Sigmoid colon (tissue), 7 donors: ENCODE measurements at regions of chr17 and their contacts with region 1.

Region 1: DNA sequence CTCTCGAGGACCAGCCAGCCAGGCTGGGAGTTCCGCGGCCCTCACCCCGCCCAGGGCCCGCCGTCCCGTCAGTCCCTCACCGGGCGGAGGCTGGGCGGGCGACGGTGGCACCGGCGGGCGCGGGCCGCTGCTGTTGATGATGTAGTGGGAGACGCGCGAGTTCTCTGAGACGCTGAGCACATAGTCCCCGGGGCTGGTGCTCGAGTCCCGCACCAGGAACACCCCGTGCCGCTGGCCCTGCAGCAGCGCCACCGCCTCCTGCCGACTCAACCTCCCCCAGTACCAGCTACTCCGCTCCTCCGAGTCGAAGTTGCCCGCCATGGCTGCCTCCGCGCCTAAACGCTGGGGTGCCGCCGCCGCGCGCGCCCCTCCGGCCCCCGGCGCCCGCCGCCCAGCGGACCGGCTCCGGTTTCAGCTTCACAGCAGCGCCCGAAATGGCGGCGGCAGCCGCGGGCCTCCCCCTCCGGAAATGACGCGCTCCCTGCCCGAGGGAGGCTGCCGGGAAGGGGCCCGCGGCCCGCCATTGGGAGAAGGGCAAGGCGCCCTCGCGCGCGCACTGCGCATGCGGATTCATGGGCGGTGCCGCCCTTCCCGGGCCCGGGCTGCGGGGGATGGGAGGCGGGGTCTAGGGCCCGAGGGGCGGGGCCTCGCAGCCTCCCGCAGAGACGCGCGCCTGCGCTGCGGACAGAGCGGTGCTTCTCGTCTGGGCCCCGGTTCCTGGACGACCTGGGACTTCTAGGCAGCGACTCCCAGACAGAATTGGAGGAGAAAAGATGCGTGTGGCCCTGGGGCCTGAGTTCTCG is at the start of gene CRK:
- DNase-seq: peak; percentile 98
- H3K4me3 ChIP-seq: peak within 1 kb of the TSS; percentile 64 to 98 (median 81)
- H3K27ac ChIP-seq: peak within 1 kb of the TSS; percentile 96 to 100 (median 98)
- H3K4me1 ChIP-seq: peaks cover 0 to 62% (median 55%) of the 10 kb centered on the region in 4 donors
- H3K27me3 ChIP-seq: no peaks in the 10 kb centered on the region
- CTCF ChIP-seq: no peak
- EP300 ChIP-seq: peak in 1 of 4 donors; percentile 38
- POLR2A ChIP-seq: peak; percentile 53 to 81
- total RNA-seq, gene CRK: 61.5 to 88.7 (median 76.1) TPM

Region 2: GRCh38 chr17:1488030-1488863 is 32.2 kb after region 1 on chr17:
- intact Hi-C with region 1: loop called (anchors 2 kb)
- DNase-seq: peak; percentile 94
- H3K4me3 ChIP-seq: peak overlapping the region; percentile 33 to 91 (median 88)
- H3K27ac ChIP-seq: peak overlapping the region; percentile 98 to 100 (median 99)
- H3K4me1 ChIP-seq: peaks cover 0 to 84% (median 80%) of the 10 kb centered on the region in 4 donors
- H3K27me3 ChIP-seq: no peaks in the 10 kb centered on the region
- CTCF ChIP-seq: peak in 2 of 4 experiments; percentile 8 to 9
- EP300 ChIP-seq: no peak
- POLR2A ChIP-seq: no peak